ENCODE measurements at regions of chr4 and their contacts with region 1.

Region 1: GRCh38 chr4:158209825-158210807 is at the start of gene TMEM144:
- DNase-seq: peak; percentile 28
- H3K4me3 ChIP-seq: peak within 1 kb of the TSS; percentile 44
- CTCF ChIP-seq: peak; percentile 31

Region 2: GRCh38 chr4:158193171-158193749 is 16.9 kb before region 1 on chr4:
- CTCF ChIA-PET with region 1: interaction called, 24 read pairs
- POLR2A ChIA-PET with region 1: interaction called, 3 read pairs
- DNase-seq: no peak
- H3K4me3 ChIP-seq: no peak overlapping the region
- CTCF ChIP-seq: peak; percentile 17

Region 3: DNA sequence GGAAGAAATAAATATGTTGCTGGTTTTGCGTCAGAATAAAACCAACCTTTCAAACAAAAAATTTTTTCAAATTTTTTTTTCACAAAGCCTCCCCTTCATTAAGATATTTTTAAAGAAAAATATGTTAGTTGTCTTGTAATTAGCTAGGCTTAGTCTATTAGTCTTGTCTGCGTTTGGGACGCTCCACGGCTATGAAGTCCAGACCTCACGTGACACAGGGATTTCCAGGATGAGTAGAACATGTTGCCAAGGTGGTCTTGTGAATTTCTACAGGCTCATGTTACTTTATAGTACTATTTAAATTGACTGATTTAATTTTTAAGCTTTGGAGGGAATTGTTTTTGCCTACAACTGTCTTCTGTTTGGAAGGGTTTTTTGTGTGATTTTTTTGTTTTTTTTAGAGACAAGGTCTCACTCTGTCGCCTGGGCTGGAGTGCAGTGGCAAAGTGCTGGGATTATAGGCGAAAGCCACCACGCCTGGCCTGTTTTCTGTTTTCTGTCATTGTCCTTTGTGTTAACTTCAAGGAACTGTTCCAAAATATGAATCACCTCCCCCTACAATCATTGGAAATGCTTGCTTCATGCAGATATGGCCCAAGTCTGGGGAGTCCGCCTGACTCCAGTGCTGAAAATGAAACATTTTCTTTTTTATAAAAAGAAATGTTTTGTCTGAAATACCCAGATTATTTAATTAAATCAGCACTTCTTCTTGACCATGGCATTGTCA is 26.4 kb after region 1 on chr4:
- CTCF ChIA-PET with region 1: no interaction called
- POLR2A ChIA-PET with region 1: no interaction called
- DNase-seq: no peak
- H3K4me3 ChIP-seq: no peak overlapping the region
- CTCF ChIP-seq: no peak